ENCODE measurements at regions of chrX and their contacts with region 1.

Region 1: GRCh38 chrX:19372170-19372546 is 28.4 kb downstream of the PDHA1 start:
- DNase-seq: no peak
- H3K4me3 ChIP-seq: peak overlapping the region; percentile 54
- CTCF ChIP-seq: peak; percentile 77

Region 2: DNA sequence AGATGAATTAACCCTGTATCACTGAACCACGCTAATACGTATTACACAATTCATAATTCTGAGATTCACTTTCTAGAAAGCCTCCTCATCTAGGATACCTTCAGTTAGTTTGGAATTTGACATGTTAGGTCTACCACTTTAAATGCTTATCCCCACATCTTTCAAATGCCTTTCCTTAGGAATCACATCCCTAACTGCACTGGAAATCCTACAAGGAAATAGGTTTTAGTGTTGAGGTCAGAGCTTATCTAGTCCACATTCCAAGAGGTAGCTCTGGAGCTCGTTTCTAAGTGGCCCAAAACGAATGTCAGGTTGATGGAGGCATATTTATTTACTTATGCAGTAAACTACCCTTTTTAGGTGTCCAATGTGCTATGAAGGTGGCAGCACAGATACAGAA is 10.5 kb before region 1 on chrX:
- CTCF ChIA-PET with region 1: interaction called, 11 read pairs
- POLR2A ChIA-PET with region 1: no interaction called
- DNase-seq: no peak
- H3K4me3 ChIP-seq: no peak overlapping the region
- CTCF ChIP-seq: no peak

Region 3: GRCh38 chrX:19382555-19383145 is 10.5 kb after region 1 on chrX:
- CTCF ChIA-PET with region 1: interaction called, 13 read pairs
- POLR2A ChIA-PET with region 1: no interaction called
- DNase-seq: no peak
- H3K4me3 ChIP-seq: no peak overlapping the region
- CTCF ChIP-seq: peak; percentile 68

Region 4: GRCh38 chrX:19535476-19535875 is 163.3 kb after region 1 on chrX:
- CTCF ChIA-PET with region 1: interaction called, 52 read pairs
- POLR2A ChIA-PET with region 1: no interaction called
- DNase-seq: no peak
- H3K4me3 ChIP-seq: no peak overlapping the region
- CTCF ChIP-seq: peak; percentile 4